ENCODE measurements at regions of chr22 and their contacts with region 1.

Region 1: GRCh38 chr22:40679964-40680818 is 907 bp downstream of the MCHR1 start:
- DNase-seq: no peak
- ATAC-seq: no peak
- H3K4me3 Mint-ChIP-seq: no peak overlapping the region
- H3K27ac Mint-ChIP-seq: no peak overlapping the region
- H3K4me1 Mint-ChIP-seq: peaks cover 30% of the 10 kb centered on the region
- H3K27me3 Mint-ChIP-seq: peaks cover 20% of the 10 kb centered on the region
- CTCF ChIP-seq: no peak

Region 2: DNA sequence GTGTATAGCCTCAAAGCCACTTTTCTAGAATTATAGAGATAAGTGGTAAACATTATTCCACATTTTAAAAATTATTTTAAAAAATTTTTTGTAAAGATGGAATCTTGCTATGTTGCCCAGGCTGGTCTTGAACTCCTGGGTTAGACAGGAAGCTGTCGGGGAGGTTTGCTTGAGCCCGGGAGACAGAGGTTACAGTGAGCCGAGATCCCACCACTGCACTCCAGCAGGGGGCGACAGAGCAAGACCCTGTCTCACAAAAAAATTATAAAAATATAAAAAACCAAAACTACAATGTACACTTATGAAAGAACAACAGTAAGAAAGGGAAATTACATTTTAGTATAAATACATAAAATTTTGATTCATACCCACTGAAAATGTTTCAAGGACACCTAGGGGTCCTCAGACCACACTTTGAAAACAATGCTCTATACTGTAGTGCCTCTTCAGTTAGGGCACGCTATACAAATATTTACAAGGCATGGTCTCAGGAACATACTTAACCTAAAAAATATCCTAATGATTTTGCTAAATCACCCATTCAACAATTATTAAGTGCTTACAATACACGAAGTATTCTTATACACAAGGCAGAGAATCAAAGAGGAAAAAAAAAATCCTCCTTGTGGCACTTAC is 154.8 kb before region 1 on chr22:
- CTCF ChIA-PET with region 1: interaction called, 10 read pairs
- POLR2A ChIA-PET with region 1: no interaction called
- intact Hi-C with region 1: no loop called
- DNase-seq: peak; percentile 85
- ATAC-seq: peak; percentile 69
- H3K4me3 Mint-ChIP-seq: no peak overlapping the region
- H3K27ac Mint-ChIP-seq: no peak overlapping the region
- H3K4me1 Mint-ChIP-seq: peaks cover 43% of the 10 kb centered on the region
- H3K27me3 Mint-ChIP-seq: no peaks in the 10 kb centered on the region
- CTCF ChIP-seq: peak; percentile 91

Region 3: DNA sequence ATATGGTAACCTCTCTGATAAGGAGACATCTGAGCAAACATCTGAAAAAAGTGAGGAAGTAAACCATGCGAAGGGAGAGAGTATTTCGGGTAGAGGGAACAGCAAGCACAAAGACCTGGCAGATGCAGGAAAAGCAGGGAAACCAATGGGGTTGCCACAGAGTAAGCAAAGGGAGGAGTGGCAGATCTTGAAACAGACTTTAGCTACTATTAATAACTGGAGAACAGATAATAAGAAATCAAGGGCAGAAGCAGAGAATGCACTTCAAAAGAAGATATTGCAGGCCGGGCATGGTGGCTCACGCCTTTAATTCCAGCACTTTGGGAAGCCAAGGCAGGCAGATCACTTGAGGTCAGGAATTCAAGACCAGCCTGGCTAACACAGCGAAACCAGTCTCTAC is 61.8 kb before region 1 on chr22:
- CTCF ChIA-PET with region 1: no interaction called
- POLR2A ChIA-PET with region 1: no interaction called
- intact Hi-C with region 1: no loop called
- DNase-seq: no peak
- ATAC-seq: no peak
- H3K4me3 Mint-ChIP-seq: no peak overlapping the region
- H3K27ac Mint-ChIP-seq: no peak overlapping the region
- H3K4me1 Mint-ChIP-seq: peaks cover 6% of the 10 kb centered on the region
- H3K27me3 Mint-ChIP-seq: no peaks in the 10 kb centered on the region
- CTCF ChIP-seq: no peak

Region 4: DNA sequence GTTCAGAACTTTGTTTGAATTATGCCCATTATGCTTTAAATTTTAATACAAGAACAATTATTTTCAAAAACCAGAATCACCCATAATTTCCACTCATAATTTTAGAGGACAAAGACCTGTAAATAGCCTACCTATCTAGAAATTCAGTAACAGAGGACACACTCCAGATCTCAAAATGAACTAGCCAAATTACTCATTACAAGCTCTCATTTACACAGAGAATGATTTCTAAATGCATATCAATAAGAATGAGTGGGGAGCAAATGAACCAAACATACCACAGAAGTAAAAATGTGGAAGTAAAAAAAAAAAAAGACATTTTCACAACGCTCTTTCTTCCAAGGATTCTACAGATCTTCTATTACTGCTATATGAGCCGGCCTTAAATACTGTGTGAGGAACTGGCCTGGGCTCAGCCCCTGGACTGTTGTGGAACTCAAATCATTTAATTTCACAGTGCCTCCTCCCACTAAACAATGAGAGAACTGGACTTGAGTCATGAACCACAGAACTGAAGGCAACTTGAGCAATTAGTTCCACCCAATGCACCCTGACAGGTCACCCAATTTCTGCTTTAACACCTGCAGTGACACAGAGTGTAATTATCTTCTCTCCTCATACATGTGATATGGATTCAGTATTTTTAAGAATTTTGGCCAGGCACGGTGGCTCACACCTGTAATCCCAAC is 51.7 kb before region 1 on chr22:
- CTCF ChIA-PET with region 1: no interaction called
- POLR2A ChIA-PET with region 1: no interaction called
- intact Hi-C with region 1: no loop called
- DNase-seq: no peak
- ATAC-seq: peak; percentile 66
- H3K4me3 Mint-ChIP-seq: no peak overlapping the region
- H3K27ac Mint-ChIP-seq: no peak overlapping the region
- H3K4me1 Mint-ChIP-seq: peaks cover 38% of the 10 kb centered on the region
- H3K27me3 Mint-ChIP-seq: no peaks in the 10 kb centered on the region
- CTCF ChIP-seq: no peak

Region 5: GRCh38 chr22:40709752-40710413 is 29.7 kb after region 1 on chr22:
- CTCF ChIA-PET with region 1: interaction called, 17 read pairs
- POLR2A ChIA-PET with region 1: interaction called, 5 read pairs
- intact Hi-C with region 1: no loop called
- DNase-seq: no peak
- ATAC-seq: no peak
- H3K4me3 Mint-ChIP-seq: no peak overlapping the region
- H3K27ac Mint-ChIP-seq: no peak overlapping the region
- H3K4me1 Mint-ChIP-seq: peaks cover 9% of the 10 kb centered on the region
- H3K27me3 Mint-ChIP-seq: no peaks in the 10 kb centered on the region
- CTCF ChIP-seq: no peak

Region 6: GRCh38 chr22:40764763-40765441 is 84.7 kb after region 1 on chr22:
- CTCF ChIA-PET with region 1: interaction called, 42 read pairs
- POLR2A ChIA-PET with region 1: no interaction called
- intact Hi-C with region 1: loop called (anchors 5 kb)
- DNase-seq: peak; percentile 53
- ATAC-seq: peak; percentile 72
- H3K4me3 Mint-ChIP-seq: no peak overlapping the region
- H3K27ac Mint-ChIP-seq: peak overlapping the region; percentile 86
- H3K4me1 Mint-ChIP-seq: peaks cover 17% of the 10 kb centered on the region
- H3K27me3 Mint-ChIP-seq: no peaks in the 10 kb centered on the region
- CTCF ChIP-seq: no peak

Region 7: DNA sequence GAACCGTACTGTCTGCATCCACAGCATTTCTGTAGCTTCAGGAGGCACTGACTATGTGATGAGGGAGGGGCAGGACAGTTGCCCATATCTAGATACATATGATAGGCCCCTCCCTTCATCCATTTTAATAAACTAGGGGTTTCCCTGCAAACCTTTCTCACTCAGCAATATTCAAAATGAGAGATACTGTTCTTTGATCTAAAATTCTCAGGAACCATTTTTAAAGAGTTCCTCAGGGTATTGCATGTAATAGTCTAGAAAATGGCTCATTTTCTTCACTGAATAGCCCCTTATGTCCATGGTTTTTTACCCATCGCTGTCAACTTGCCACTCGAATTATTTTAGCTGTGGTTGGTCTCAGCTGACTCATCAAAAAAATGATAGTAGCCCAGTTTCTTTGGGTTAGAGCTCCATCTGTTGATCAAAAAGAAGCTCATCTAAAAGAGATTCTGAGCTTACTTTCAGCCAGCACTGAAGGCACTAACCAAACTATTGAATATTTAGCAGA is 218.7 kb after region 1 on chr22:
- CTCF ChIA-PET with region 1: interaction called, 19 read pairs
- POLR2A ChIA-PET with region 1: interaction called, 6 read pairs
- intact Hi-C with region 1: no loop called
- DNase-seq: peak; percentile 19
- ATAC-seq: peak; percentile 91
- H3K4me3 Mint-ChIP-seq: peak overlapping the region; percentile 43
- H3K27ac Mint-ChIP-seq: peak overlapping the region; percentile 80
- H3K4me1 Mint-ChIP-seq: peaks cover 10% of the 10 kb centered on the region
- H3K27me3 Mint-ChIP-seq: no peaks in the 10 kb centered on the region
- CTCF ChIP-seq: peak; percentile 75

Measured in activated CD8-positive, alpha-beta T cell treated with anti-CD3 and anti-CD28 coated beads for 36 hours (primary cell).